ENCODE measurements at regions of chr2 and their contacts with region 1.

Region 1: GRCh38 chr2:20411361-20411894 is 35.4 kb upstream of the RHOB start:
- DNase-seq: peak; percentile 88
- H3K4me3 Mint-ChIP-seq: no peak overlapping the region
- H3K27ac Mint-ChIP-seq: no peak overlapping the region
- H3K4me1 Mint-ChIP-seq: peaks cover 23% of the 10 kb centered on the region
- H3K27me3 Mint-ChIP-seq: no peaks in the 10 kb centered on the region
- CTCF ChIP-seq: peak; percentile 74

Region 2: DNA sequence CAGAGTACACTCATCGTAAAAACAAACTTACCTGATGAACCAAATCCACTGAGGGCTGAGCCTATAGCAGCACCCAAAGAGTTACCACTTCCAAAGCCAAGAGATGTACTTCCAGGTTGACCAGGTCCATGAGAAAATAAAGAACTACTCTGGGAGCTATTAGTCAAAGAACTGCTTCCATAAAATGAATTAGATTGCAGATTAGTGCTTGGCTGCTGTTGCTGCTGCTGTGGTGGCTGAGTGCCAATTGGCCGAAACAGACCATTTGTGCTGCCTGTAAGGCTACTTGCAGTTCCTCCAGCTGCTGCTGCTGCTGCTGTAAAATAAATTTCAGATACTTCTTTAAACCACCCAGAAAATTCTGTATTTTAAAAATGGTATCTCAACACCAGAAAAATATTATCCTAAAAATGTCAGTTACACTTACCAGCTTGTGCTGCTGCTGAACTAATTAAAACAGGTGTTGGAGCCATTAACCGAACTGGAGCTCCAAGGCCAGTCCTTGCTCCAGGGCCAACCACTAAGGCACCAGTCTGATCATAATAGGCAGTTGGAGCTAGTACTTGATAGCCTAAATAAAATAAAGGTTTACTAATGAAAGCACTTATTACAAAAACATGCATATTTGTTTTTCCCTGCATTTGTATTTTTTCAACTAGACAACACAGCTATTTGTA is 128.4 kb before region 1 on chr2:
- CTCF ChIA-PET with region 1: no interaction called
- POLR2A ChIA-PET with region 1: no interaction called
- intact Hi-C with region 1: no loop called
- DNase-seq: no peak
- H3K4me3 Mint-ChIP-seq: no peak overlapping the region
- H3K27ac Mint-ChIP-seq: no peak overlapping the region
- H3K4me1 Mint-ChIP-seq: no peaks in the 10 kb centered on the region
- H3K27me3 Mint-ChIP-seq: no peaks in the 10 kb centered on the region
- CTCF ChIP-seq: no peak

Region 3: DNA sequence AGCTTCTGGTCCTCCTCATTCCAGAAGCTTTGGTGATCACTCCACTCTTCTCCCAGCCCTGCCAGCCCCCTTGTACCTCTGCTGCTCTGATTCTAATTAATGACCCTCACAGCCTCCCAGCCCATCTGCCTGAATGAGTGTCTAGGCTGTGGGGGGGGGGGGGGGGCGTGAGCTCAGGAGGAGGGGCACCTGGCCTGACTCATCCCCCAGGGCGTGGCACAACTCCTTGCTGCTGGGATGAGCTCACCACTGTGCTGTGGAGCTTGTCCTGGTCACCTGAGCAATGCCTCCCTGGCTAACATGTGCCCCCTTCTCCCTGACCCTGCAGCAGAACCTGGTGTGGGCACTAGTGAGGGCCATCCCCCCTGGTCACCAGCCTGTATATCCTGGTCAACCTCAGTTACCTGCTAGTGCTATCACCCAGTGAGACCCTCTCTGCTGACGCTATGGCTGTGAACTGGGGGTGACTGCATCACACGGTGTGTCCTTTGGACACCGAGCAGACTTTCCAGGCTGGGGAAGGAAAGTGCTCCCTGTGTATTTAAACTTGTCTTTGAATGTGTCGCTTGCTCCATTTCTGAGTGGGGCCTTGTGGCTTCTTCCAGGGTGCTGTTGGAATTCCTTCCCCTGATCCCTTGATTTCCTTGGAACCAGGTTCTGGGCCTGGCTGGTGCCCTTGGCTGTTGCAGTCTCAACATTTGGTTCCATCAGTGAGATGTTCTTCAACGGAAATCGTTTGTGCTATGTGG is 19.3 kb before region 1 on chr2:
- CTCF ChIA-PET with region 1: interaction called, 48 read pairs
- POLR2A ChIA-PET with region 1: interaction called, 3 read pairs
- intact Hi-C with region 1: no loop called
- DNase-seq: peak; percentile 61
- H3K4me3 Mint-ChIP-seq: no peak overlapping the region
- H3K27ac Mint-ChIP-seq: no peak overlapping the region
- H3K4me1 Mint-ChIP-seq: peaks cover 11% of the 10 kb centered on the region
- H3K27me3 Mint-ChIP-seq: no peaks in the 10 kb centered on the region
- CTCF ChIP-seq: no peak

Region 4: DNA sequence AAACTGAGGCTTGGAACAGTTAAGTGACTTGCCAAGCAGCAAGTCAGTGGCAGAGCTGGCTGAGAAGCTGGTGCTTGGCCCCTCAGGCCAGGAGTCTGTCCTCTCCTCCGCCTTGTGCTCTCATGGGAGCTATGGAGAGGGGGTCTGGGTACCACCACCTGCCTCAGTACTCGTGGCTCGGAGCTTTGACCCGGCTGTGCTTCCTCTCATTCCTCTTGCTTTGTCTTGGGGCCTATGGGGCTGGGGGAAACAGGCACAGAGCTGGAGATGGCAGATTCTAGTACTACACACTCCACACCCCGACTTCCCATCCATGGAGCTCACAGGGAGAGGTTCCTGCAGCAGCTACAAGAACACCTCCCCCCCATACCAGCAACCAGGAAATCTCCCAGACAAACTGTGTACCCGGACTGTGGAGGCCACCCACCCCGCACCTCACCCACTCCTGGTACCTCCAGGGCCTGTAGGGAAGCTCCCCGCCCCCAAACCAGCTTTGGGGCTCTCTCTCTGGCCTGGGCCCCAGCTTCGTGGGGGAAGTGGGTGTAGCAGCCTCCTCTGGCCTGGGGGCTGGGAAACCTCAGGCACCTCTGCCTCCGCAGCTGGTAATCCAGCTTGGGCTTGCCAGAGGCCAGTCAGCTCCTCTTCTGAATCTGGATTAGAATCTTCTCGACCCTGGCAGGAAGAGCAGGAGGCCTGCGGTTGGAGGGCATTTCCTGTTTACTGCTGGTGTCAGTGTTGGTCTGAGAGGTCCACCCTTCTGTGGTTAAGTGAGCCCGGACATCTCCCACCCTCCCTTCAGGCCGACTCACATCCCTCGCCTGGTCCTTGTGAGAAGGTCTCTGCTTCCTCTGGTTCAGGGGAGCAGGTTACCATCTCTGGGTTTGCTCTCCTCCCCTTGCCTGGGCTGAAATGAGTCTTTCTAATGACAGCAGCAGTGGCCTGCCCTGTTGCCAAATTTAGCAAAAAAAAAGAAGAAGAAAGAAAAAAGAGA is 13.2 kb after region 1 on chr2:
- CTCF ChIA-PET with region 1: interaction called, 275 read pairs
- POLR2A ChIA-PET with region 1: interaction called, 29 read pairs
- intact Hi-C with region 1: no loop called
- DNase-seq: peak; percentile 61
- H3K4me3 Mint-ChIP-seq: no peak overlapping the region
- H3K27ac Mint-ChIP-seq: peak overlapping the region; percentile 67
- H3K4me1 Mint-ChIP-seq: peaks cover 47% of the 10 kb centered on the region
- H3K27me3 Mint-ChIP-seq: no peaks in the 10 kb centered on the region
- CTCF ChIP-seq: no peak

Region 5: DNA sequence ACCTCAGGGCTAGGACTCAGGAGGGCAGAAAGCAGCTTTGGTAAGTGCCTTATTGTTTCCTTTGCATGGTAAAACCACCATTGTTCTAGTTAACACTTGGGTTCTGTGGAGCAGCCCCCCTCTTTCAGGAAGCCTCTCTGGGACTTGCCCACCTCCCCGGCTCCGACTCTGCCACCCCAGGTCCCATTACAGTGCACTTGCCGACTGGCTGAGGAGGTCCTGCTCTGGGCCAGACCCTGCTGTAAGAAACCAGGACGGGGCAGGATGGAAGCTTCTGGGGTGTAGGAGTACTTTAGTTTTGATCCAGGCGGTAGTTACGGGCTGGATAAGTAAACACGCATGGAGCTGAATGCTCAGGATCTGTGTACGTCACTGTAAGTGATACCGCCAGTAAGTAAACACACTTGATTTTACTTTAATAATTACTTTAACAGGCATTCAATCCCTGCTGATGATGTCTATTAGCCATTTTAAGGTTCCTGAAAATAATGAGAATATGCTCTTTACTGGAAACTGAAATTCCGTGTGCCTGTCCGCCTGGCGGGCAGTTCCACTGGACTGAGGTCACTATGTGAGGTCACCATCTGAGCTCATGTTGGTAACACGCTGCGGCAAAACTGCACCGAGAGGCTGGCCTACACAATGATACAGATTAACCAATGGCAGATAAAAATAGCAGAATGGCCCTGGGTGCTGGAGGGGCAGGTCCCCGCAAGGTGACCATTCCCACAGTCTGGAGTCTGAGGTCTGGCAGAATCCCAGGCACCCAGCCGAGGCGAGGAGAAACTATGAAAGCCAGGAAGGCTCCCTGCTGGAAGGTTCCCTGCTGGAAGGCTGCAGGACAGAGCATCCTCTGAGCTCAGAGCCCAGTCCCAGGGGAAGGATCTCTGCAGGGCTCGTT is 214.3 kb after region 1 on chr2:
- CTCF ChIA-PET with region 1: interaction called, 17 read pairs
- POLR2A ChIA-PET with region 1: no interaction called
- intact Hi-C with region 1: no loop called
- DNase-seq: no peak
- H3K4me3 Mint-ChIP-seq: no peak overlapping the region
- H3K27ac Mint-ChIP-seq: no peak overlapping the region
- H3K4me1 Mint-ChIP-seq: peaks cover 4% of the 10 kb centered on the region
- H3K27me3 Mint-ChIP-seq: no peaks in the 10 kb centered on the region
- CTCF ChIP-seq: no peak

Region 6: DNA sequence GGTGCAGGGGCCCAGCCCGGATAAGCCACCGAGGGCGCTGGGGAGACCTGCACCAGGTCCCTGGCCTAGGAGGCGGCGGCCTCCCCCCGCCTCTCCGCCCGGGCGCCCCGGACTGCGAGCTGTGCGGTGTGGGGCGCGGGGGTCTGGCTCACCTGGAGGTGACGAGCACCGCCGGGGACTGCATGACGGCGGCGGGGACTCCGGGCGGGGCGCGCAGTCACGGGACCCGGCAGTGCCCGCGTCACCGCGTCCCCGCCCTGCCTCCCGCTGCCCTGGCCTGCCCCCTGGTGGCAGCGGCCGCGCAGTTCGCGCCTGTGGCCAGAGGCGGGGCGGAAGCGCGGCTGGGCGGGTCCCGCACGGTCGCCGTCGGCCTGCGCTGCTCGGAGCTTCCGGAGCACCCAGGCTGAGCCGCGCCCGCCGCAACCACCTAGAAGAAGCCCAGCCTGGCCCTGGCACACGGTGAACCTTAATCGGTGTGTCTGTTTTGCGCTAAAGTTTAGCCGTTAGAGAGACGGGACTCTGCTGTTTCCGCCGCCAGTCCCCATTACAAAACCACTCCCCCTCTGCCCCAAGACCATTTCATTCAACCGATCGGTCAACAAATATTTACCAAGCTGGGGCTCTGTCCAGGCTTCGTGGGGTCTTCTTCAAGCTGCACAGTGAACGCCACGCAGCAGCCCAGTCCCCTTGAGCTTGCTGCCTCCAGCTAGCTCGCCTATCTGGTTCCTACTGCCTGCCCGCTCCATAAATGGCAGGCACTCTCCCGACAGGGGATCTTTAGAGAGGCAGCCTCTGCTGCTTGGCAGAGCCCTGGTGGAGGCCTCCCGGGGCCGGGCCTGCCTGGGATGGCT is 239.7 kb after region 1 on chr2 and contains the start of gene HS1BP3:
- CTCF ChIA-PET with region 1: interaction called, 71 read pairs
- POLR2A ChIA-PET with region 1: interaction called, 3 read pairs
- intact Hi-C with region 1: no loop called
- DNase-seq: peak; percentile 81
- H3K4me3 Mint-ChIP-seq: peak within 1 kb of the TSS; percentile 82
- H3K27ac Mint-ChIP-seq: peak within 1 kb of the TSS; percentile 62
- H3K4me1 Mint-ChIP-seq: peaks cover 22% of the 10 kb centered on the region
- H3K27me3 Mint-ChIP-seq: peaks cover 12% of the 10 kb centered on the region
- CTCF ChIP-seq: peak; percentile 89
- total RNA-seq, gene HS1BP3: 10.0 and 25.1 TPM in 2 replicates

Measured in MCF 10A (cell line).